ENCODE measurements at regions of chr18 and their contacts with region 1.

Region 1: GRCh38 chr18:49510393-49511115 is 23.5 kb upstream of the C18orf32 start:
- DNase-seq: peak; percentile 59 to 75
- H3K4me3 ChIP-seq: no peak overlapping the region
- H3K4me1 ChIP-seq: peaks cover 5% of the 10 kb centered on the region; the same call in 1 of the 2 replicates
- H3K27me3 ChIP-seq: no peaks in the 10 kb centered on the region

Region 2: GRCh38 chr18:48928787-48929186 is 581.8 kb before region 1 on chr18:
- in situ Hi-C with region 1: no loop called
- DNase-seq: no peak
- H3K4me3 ChIP-seq: no peak overlapping the region
- H3K4me1 ChIP-seq: peaks cover 48% of the 10 kb centered on the region
- H3K27me3 ChIP-seq: no peaks in the 10 kb centered on the region

Region 3: DNA sequence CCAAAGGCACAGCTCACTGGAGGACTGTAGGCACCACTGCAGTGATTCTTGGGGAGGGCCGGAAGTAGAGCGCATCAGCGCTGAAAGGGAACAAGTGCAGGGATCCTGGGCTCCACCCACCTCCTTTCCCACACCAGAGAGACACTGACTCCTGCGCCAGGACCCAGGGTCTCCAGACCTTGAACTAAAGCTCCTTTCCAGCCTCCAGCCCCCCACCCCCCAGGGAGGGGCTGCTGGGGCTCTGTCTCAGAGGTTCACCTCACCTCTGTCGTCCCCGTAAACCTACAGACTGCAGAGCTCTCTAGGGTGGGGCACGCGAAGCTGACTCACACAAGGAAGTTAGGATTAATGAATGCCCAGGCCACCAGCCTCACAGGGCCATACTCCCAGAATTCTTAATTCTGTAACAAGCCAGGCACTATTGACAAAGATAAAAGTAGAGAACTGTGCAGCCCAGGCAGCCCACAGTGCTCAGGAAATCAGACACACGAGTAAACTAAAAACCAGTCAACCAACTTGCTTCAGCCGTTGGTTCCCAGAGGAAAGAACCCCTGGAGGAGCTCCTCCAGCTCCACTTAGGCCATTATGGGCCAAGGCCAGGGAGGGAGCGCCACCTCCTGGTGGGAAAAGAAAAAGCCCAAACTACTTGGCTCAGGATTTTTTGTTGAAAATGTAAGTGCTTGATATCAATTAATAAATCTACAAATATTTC is 347.9 kb after region 1 on chr18:
- in situ Hi-C with region 1: loop called (anchors 5 kb)
- DNase-seq: peak; percentile 57 to 81
- H3K4me3 ChIP-seq: no peak overlapping the region
- H3K4me1 ChIP-seq: no peaks in the 10 kb centered on the region
- H3K27me3 ChIP-seq: no peaks in the 10 kb centered on the region